GM12878 (cell line): ENCODE measurements at regions of chr16 and their contacts with region 1.

Region 1: GRCh38 chr16:8943966-8944759 is 19.5 kb downstream of the USP7 start:
- DNase-seq: peak; percentile 58
- ATAC-seq: peak; percentile 82
- H3K4me3 ChIP-seq: peak overlapping the region; percentile 68
- H3K27ac ChIP-seq: peak overlapping the region; percentile 63
- H3K4me1 ChIP-seq: peaks cover 73% of the 10 kb centered on the region
- H3K27me3 ChIP-seq: no peaks in the 10 kb centered on the region
- CTCF ChIP-seq: no peak
- EP300 ChIP-seq: 0 out of 4 replicates have a peak, but pooled peaks of 1 of the 2 experiments have one; percentile 29
- POLR2A ChIP-seq: no peak
- RAD21 ChIP-seq: no peak

Region 2: GRCh38 chr16:8567750-8568617 is 376.2 kb before region 1 on chr16:
- CTCF ChIA-PET with region 1: no interaction called
- POLR2A ChIA-PET with region 1: no interaction called
- RAD21 ChIA-PET with region 1: no interaction called
- SMC1A ChIA-PET with region 1: no interaction called
- in situ Hi-C with region 1: no loop called
- intact Hi-C with region 1: no loop called
- DNase-seq: peak; percentile 66
- ATAC-seq: peak; percentile 96
- H3K4me3 ChIP-seq: no peak overlapping the region
- H3K27ac ChIP-seq: no peak overlapping the region
- H3K4me1 ChIP-seq: no peaks in the 10 kb centered on the region
- H3K27me3 ChIP-seq: no peaks in the 10 kb centered on the region; a peak in 1 of 4 replicates
- CTCF ChIP-seq: peak; percentile 88 to 99 (median 95)
- EP300 ChIP-seq: no peak
- POLR2A ChIP-seq: no peak
- RAD21 ChIP-seq: peak; percentile 96

Region 3: DNA sequence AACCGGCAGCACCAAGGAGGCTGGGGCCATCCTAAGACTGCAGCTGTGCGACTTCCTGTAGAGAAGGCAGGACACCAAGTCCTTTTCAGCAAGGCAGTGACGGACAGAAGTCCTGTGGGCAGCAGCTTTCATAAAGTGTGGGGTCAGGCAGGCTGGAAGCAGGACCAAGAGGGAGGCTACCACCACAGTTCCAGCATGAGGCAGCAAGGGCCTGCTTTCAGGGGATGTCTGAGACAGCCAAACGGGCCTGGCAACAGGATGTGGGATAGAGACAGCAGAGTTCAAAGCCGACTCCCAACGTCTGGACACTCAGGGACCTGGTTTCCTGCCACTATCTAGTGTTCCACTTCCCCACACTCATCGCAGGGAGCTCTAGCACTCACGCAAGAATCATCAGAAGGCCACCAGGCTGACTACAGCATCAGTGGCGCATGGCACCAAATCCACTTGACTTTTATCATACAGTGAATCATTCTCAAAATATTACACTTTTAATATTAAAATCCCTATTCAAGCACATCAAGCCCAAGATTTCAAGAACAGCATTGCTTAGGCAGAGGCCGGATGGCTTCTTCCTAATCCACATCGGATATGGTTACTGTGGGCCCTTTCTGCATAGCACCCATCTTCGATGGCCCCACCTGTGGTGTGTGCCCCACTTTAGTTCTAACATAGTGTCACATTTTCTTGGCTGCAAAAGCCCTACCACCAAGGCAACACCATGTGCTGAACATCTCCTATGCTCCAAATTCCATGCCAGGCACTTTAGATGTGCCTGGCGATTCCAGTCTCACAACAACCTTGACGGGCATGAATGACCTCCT is 14.4 kb after region 1 on chr16:
- CTCF ChIA-PET with region 1: interaction called, 12 read pairs
- POLR2A ChIA-PET with region 1: interaction called, 6 read pairs
- RAD21 ChIA-PET with region 1: interaction called, 21 read pairs
- SMC1A ChIA-PET with region 1: interaction called, 52 read pairs
- in situ Hi-C with region 1: no loop called
- intact Hi-C with region 1: loop called (anchors 2 kb)
- DNase-seq: no peak
- ATAC-seq: peak; percentile 37
- H3K4me3 ChIP-seq: peak overlapping the region; percentile 80
- H3K27ac ChIP-seq: peak overlapping the region; percentile 41
- H3K4me1 ChIP-seq: peaks cover 39% of the 10 kb centered on the region
- H3K27me3 ChIP-seq: no peaks in the 10 kb centered on the region
- CTCF ChIP-seq: no peak
- EP300 ChIP-seq: no peak
- POLR2A ChIP-seq: no peak
- RAD21 ChIP-seq: no peak

Region 4: DNA sequence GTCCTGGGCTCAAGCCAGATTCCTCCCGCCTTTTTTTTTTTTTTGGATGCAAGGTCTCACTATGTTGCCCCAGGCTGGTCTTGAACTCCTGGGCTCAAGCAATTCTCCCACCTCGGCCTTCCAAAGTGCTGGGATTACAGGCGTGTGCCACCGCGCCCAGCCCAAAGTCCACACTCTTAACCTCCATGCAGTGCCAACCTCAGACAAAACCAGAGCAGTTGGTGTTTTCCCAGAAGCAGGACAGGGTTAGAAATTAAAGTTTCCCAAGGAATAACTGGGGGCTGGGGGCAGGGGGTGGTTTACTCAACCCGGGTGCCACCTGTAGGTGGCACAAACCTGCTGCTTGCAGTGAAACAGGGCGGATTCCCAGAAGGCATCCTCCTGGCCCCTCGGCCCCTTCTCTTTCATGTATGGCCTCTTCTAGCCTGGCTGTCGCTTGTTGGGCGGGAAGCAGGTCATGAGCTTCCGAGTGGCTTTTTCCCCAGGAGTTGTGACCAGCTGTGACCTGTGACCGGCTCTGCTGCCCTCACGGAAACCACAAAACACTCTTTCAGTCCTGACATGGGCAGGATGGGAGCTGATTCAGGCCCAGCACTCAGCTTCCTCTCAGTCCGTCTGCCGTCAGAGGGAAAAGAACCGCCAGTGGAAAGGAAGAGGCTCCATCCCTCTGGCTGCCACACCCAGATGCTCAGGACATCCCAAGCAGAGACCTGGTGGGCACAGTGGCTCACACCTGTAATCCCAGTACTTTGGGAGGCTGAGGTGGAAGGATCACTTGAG is 45.1 kb after region 1 on chr16:
- CTCF ChIA-PET with region 1: no interaction called
- POLR2A ChIA-PET with region 1: no interaction called
- RAD21 ChIA-PET with region 1: no interaction called
- SMC1A ChIA-PET with region 1: no interaction called
- in situ Hi-C with region 1: no loop called
- intact Hi-C with region 1: no loop called
- DNase-seq: no peak
- ATAC-seq: no peak
- H3K4me3 ChIP-seq: no peak overlapping the region
- H3K27ac ChIP-seq: no peak overlapping the region
- H3K4me1 ChIP-seq: no peaks in the 10 kb centered on the region
- H3K27me3 ChIP-seq: no peaks in the 10 kb centered on the region
- CTCF ChIP-seq: no peak
- EP300 ChIP-seq: no peak
- POLR2A ChIP-seq: no peak
- RAD21 ChIP-seq: no peak

Region 5: GRCh38 chr16:9027070-9027795 is 83.1 kb after region 1 on chr16:
- CTCF ChIA-PET with region 1: no interaction called
- POLR2A ChIA-PET with region 1: no interaction called
- RAD21 ChIA-PET with region 1: no interaction called
- SMC1A ChIA-PET with region 1: no interaction called
- in situ Hi-C with region 1: no loop called
- intact Hi-C with region 1: no loop called
- DNase-seq: no peak
- ATAC-seq: no peak
- H3K4me3 ChIP-seq: no peak overlapping the region
- H3K27ac ChIP-seq: no peak overlapping the region
- H3K4me1 ChIP-seq: no peaks in the 10 kb centered on the region
- H3K27me3 ChIP-seq: no peaks in the 10 kb centered on the region
- CTCF ChIP-seq: no peak
- EP300 ChIP-seq: no peak
- POLR2A ChIP-seq: no peak
- RAD21 ChIP-seq: no peak

Region 6: DNA sequence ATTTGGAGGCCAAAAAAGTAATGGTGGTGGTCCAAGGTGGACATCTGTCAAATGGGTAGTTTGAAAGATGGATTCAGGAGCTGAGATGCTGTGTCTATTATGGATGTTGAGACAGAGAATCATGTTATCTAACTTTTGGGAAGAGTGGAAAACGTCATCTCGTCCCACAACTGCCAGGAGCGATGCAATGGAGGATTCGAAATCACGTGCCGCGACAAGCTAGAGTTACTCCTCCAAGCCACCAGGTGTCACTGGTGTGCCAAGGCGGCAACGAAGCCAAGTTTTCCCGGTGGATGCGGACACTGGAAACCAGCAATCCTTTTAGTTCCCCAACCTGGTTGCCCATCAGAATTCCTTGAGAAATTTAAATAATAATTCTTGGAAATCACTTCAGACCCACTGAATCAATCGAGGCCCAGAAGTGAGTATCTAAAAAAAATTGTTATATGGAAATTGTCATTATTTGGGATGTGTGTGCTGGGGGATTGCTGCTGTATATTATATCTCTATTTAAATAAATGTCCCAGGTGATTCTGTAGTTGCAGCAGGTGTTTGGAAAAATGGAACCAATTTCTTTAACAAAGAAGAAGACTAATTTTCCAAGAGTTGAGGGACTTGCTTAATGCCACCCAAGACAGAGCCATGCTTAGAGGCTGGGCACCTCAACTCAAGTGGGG is 353.4 kb after region 1 on chr16:
- CTCF ChIA-PET with region 1: no interaction called
- POLR2A ChIA-PET with region 1: no interaction called
- RAD21 ChIA-PET with region 1: no interaction called
- SMC1A ChIA-PET with region 1: no interaction called
- in situ Hi-C with region 1: no loop called
- intact Hi-C with region 1: no loop called
- DNase-seq: no peak
- ATAC-seq: no peak
- H3K4me3 ChIP-seq: no peak overlapping the region
- H3K27ac ChIP-seq: no peak overlapping the region
- H3K4me1 ChIP-seq: no peaks in the 10 kb centered on the region
- H3K27me3 ChIP-seq: no peaks in the 10 kb centered on the region
- CTCF ChIP-seq: peak; percentile 40 to 57 (median 42); a peak in 4 of 6 replicates
- EP300 ChIP-seq: no peak
- POLR2A ChIP-seq: no peak
- RAD21 ChIP-seq: peak; percentile 57